Activated naive CD4-positive, alpha-beta T cell treated with anti-CD3 and anti-CD28 coated beads for 36 hours (primary cell): ENCODE measurements at regions of chr16 and their contacts with region 1.

Region 1: DNA sequence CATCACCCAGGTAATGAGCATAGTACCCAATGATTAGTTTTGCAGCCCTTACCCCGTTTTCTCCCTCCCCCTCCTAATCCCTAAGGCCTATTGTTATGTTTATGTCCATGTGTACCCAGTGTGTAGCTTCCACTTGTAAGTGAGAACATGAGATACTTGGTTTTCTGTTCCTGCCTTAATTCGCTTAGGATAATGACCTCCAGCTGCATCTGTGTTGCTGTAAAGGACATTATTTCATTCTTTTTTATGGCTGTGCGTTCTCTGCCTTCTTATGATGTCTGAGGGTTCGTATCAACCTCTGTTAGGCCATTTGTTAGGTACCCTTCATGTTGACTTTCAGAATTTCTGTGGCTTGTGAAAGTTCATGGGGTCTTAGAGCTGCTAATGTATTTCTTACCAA is 31.0 kb downstream of the CTCF start:
- DNase-seq: no peak
- H3K4me3 Mint-ChIP-seq: no peak overlapping the region
- H3K27ac Mint-ChIP-seq: no peak overlapping the region
- H3K4me1 Mint-ChIP-seq: peaks cover 27% of the 10 kb centered on the region
- H3K27me3 Mint-ChIP-seq: no peaks in the 10 kb centered on the region

Region 2: GRCh38 chr16:67628216-67628615 is 34.9 kb after region 1 on chr16:
- CTCF ChIA-PET with region 1: no interaction called
- intact Hi-C with region 1: loop called (anchors 5 kb)
- DNase-seq: no peak
- H3K4me3 Mint-ChIP-seq: no peak overlapping the region
- H3K27ac Mint-ChIP-seq: no peak overlapping the region
- H3K4me1 Mint-ChIP-seq: no peaks in the 10 kb centered on the region
- H3K27me3 Mint-ChIP-seq: no peaks in the 10 kb centered on the region